ENCODE measurements at regions of chr5 and their contacts with region 1.

Region 1: DNA sequence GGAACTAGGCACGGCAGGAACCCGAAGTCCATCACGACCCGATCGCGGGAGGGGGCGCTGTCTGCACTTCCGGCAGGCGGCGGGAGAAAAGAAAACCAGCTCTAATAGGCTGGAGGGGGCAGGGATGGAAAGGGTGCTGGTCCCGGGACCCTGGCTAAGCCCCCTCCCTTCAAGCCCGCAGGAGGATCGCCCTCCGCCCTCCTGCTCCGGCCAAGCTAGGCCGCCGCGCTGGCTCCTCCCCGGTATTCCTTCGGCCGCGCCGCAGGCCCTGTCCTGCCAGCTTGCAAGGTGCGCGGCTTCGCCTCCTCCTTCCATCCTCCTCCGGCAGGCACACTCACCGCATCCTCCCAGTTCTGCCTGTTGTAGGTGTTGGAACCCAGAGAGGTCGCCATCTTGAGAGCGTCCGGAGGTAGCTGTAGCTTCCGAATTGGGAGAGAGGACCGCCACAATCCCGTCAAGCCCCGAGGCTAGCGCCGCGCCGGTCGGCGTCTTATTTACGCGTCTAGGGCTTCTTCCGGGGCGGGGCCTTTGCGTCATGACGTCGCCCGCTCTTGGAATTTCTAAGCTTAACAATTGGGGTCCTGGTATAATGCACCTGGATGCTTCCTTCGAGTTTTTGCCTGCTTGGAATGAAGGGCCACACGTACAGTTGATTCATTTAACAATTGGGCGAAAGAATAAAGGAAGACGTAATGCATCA is at the start of gene RBM22:
- DNase-seq: peak; percentile 97
- H3K4me3 ChIP-seq: peak within 1 kb of the TSS; percentile 80 to 100 (median 91)
- H3K27ac ChIP-seq: peak within 1 kb of the TSS; percentile 93 to 100 (median 98)
- H3K4me1 ChIP-seq: peaks cover 13 to 26% (median 24%) of the 10 kb centered on the region in 4 donors
- H3K27me3 ChIP-seq: no peaks in the 10 kb centered on the region
- CTCF ChIP-seq: peak; percentile 53 to 66 (median 58)
- EP300 ChIP-seq: no peak
- POLR2A ChIP-seq: peak; percentile 69
- total RNA-seq, gene RBM22: 20.8 to 31.3 (median 22.7) TPM

Region 2: GRCh38 chr5:150758531-150759333 is 58.0 kb after region 1 on chr5 and contains the start of gene DCTN4:
- intact Hi-C with region 1: loop called (anchors 5 kb)
- DNase-seq: peak; percentile 99
- H3K4me3 ChIP-seq: peak within 1 kb of the TSS; percentile 62 to 91 (median 70)
- H3K27ac ChIP-seq: peak within 1 kb of the TSS; percentile 91 to 96 (median 94)
- H3K4me1 ChIP-seq: peaks cover 30 to 41% (median 35%) of the 10 kb centered on the region in 4 donors
- H3K27me3 ChIP-seq: no peaks in the 10 kb centered on the region
- CTCF ChIP-seq: no peak
- EP300 ChIP-seq: no peak
- POLR2A ChIP-seq: peak; percentile 37
- total RNA-seq, gene DCTN4: 48.5 to 59.7 (median 49.3) TPM